ENCODE measurements at regions of chr9 and their contacts with region 1.

Region 1: GRCh38 chr9:34458013-34458958 is at the starts of genes DNAI1 and FAM219A:
- DNase-seq: peak; percentile 84
- H3K4me3 ChIP-seq: peak within 1 kb of the TSS; percentile 84
- CTCF ChIP-seq: no peak

Region 2: GRCh38 chr9:33976414-33976813 is 481.9 kb before region 1 on chr9:
- CTCF ChIA-PET with region 1: no interaction called
- POLR2A ChIA-PET with region 1: no interaction called
- DNase-seq: no peak
- H3K4me3 ChIP-seq: no peak overlapping the region
- CTCF ChIP-seq: no peak

Region 3: GRCh38 chr9:34430843-34431437 is 27.3 kb before region 1 on chr9:
- CTCF ChIA-PET with region 1: interaction called, 10 read pairs
- POLR2A ChIA-PET with region 1: no interaction called
- DNase-seq: peak; percentile 74
- H3K4me3 ChIP-seq: no peak overlapping the region
- CTCF ChIP-seq: no peak

Region 4: DNA sequence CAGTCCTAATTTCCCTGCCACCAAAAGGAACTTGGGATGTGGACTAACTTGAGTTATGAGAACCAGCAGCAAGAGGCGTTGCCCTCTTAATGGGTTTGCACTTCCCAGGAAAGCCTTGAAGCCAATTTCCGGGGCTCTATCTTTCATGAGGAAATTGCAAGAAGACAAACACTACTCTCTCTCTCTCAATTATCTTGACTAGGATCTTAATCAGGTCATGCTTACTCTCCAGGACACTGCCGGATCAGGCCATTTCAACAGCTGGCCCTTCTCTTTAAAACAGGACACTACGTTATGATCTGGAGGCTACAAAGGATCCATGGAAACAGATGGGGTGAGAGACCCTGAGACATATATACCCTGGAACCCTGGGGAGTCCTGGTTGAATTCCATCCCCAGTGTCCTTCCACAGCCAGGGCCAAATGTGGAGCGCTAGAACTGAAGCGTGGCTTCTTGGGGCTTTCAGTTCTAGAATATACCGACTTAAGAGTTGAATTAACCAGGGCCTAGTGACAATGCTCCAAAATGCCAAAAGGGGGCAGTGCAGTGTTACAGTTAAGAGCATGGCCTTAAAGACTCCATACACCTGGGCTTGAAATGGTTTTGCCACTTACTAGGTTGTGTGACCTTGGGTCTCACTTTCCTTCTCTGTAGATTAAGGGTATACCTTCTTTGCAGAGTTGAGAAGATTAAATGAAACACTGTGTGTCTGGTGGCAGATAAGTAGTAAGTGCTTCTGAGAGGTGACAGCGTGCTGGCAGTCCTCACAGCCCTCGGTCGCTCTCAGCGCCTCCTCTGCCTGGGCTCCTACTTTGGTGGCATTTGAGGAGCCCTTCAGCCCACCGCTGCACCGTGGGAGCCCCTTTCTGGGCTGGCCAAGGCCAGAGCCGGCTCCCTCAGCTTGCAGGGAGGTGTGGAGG is 21.0 kb before region 1 on chr9:
- CTCF ChIA-PET with region 1: interaction called, 10 read pairs
- POLR2A ChIA-PET with region 1: no interaction called
- DNase-seq: no peak
- H3K4me3 ChIP-seq: no peak overlapping the region
- CTCF ChIP-seq: peak; percentile 71

Region 5: GRCh38 chr9:34446468-34446891 is 11.8 kb before region 1 on chr9:
- CTCF ChIA-PET with region 1: interaction called, 43 read pairs
- POLR2A ChIA-PET with region 1: interaction called, 3 read pairs
- DNase-seq: no peak
- H3K4me3 ChIP-seq: no peak overlapping the region
- CTCF ChIP-seq: no peak

Measured in AG04449 (cell line).